BJ (cell line): ENCODE measurements at regions of chrX and their contacts with region 1.

Region 1: GRCh38 chrX:70096052-70096451 is 33.8 kb downstream of the OTUD6A start:
- DNase-seq: no peak
- H3K4me3 ChIP-seq: no peak overlapping the region
- H3K27me3 ChIP-seq: no peaks in the 10 kb centered on the region
- CTCF ChIP-seq: peak; percentile 13; the same call in 1 of the 2 replicates

Region 2: GRCh38 chrX:69538321-69538876 is 557.7 kb before region 1 on chrX:
- CTCF ChIA-PET with region 1: interaction called, 16 read pairs
- POLR2A ChIA-PET with region 1: no interaction called
- DNase-seq: no peak
- H3K4me3 ChIP-seq: peak overlapping the region; percentile 32
- H3K27me3 ChIP-seq: no peaks in the 10 kb centered on the region
- CTCF ChIP-seq: peak; percentile 74

Region 3: GRCh38 chrX:70030301-70030767 is 65.7 kb before region 1 on chrX:
- CTCF ChIA-PET with region 1: interaction called, 29 read pairs
- POLR2A ChIA-PET with region 1: no interaction called
- DNase-seq: no peak
- H3K4me3 ChIP-seq: no peak overlapping the region
- H3K27me3 ChIP-seq: no peaks in the 10 kb centered on the region
- CTCF ChIP-seq: peak; percentile 68

Region 4: DNA sequence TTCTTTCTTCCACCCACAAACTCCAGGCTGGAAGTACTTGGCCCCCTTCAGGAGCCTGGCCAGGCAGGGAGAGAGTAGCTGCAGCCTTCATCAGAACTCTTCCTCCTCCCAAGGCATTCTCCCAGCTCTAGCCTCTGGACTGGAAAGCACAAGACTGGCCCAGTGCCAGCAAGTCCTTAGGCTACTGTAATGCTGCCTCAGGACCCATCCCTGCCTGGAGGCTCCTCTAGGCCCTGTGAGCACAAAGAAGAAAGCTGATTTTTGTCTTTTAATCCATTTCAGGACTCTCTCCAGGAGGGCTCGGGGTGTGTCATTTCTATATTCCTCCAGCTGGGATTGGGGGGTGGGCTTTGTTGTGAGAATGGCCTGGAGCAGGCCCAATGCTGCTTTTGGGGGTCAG is 57.1 kb before region 1 on chrX:
- CTCF ChIA-PET with region 1: interaction called, 29 read pairs
- POLR2A ChIA-PET with region 1: no interaction called
- DNase-seq: no peak
- H3K4me3 ChIP-seq: no peak overlapping the region
- H3K27me3 ChIP-seq: no peaks in the 10 kb centered on the region
- CTCF ChIP-seq: no peak

Region 5: GRCh38 chrX:70079870-70080269 is 16.2 kb before region 1 on chrX:
- CTCF ChIA-PET with region 1: interaction called, 10 read pairs
- POLR2A ChIA-PET with region 1: no interaction called
- DNase-seq: no peak
- H3K4me3 ChIP-seq: no peak overlapping the region
- H3K27me3 ChIP-seq: no peaks in the 10 kb centered on the region
- CTCF ChIP-seq: no peak